CD8-positive, alpha-beta T cell (primary cell): ENCODE measurements at regions of chr17 and their contacts with region 1.

Region 1: GRCh38 chr17:65604070-65604469 is 42.6 kb upstream of the AXIN2 start:
- DNase-seq: no peak
- ATAC-seq: no peak
- H3K4me3 ChIP-seq: no peak overlapping the region
- H3K4me3 Mint-ChIP-seq: no peak overlapping the region
- H3K27ac ChIP-seq: no peak overlapping the region
- H3K27ac Mint-ChIP-seq: no peak overlapping the region
- H3K4me1 ChIP-seq: no peaks in the 10 kb centered on the region
- H3K4me1 Mint-ChIP-seq: peaks cover 6% of the 10 kb centered on the region
- H3K27me3 ChIP-seq: no peaks in the 10 kb centered on the region
- H3K27me3 Mint-ChIP-seq: peaks cover 5% of the 10 kb centered on the region
- CTCF ChIP-seq: no peak

Region 2: DNA sequence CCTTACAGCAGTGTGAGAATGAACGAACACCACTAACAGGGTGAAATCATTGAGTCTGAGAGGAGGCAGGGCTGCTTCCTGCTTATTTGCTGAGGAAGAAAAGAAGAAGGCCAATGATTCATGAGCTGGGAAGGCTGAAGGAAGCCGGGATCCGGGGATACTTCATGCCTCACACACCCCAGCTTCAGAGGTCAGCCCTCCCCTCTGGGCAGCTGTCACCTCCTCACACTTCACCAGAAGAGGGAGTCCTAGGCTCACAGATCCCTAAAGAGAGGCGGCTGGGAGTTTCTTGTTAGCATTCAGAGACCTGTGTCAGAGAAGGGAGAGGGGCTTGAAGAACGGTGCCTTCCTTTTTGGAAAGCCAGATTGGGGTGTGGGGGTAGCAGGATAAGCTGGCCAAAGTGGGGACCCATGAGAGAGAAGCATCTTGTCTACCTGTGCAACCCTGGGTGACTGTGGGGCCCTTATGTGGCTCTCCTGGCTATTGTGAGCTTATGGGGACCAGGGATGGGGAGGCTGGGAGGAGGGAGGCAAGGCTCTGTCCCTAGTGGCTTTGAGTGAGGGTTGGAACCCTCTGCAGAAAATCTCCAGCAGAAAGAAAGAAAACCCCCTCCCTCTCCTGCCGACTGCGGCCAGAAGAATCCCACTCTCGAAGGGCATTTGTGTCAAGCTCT is 372.3 kb before region 1 on chr17:
- CTCF ChIA-PET with region 1: no interaction called
- POLR2A ChIA-PET with region 1: no interaction called
- intact Hi-C with region 1: no loop called
- DNase-seq: peak in 7 of 9 experiments; percentile 15 to 64 (median 28)
- ATAC-seq: no peak
- H3K4me3 ChIP-seq: no peak overlapping the region
- H3K4me3 Mint-ChIP-seq: no peak overlapping the region
- H3K27ac ChIP-seq: no peak overlapping the region
- H3K27ac Mint-ChIP-seq: no peak overlapping the region
- H3K4me1 ChIP-seq: peaks cover 21% of the 10 kb centered on the region
- H3K4me1 Mint-ChIP-seq: peaks cover 20% of the 10 kb centered on the region
- H3K27me3 ChIP-seq: no peaks in the 10 kb centered on the region
- H3K27me3 Mint-ChIP-seq: peaks cover 5% of the 10 kb centered on the region
- CTCF ChIP-seq: no peak

Region 3: DNA sequence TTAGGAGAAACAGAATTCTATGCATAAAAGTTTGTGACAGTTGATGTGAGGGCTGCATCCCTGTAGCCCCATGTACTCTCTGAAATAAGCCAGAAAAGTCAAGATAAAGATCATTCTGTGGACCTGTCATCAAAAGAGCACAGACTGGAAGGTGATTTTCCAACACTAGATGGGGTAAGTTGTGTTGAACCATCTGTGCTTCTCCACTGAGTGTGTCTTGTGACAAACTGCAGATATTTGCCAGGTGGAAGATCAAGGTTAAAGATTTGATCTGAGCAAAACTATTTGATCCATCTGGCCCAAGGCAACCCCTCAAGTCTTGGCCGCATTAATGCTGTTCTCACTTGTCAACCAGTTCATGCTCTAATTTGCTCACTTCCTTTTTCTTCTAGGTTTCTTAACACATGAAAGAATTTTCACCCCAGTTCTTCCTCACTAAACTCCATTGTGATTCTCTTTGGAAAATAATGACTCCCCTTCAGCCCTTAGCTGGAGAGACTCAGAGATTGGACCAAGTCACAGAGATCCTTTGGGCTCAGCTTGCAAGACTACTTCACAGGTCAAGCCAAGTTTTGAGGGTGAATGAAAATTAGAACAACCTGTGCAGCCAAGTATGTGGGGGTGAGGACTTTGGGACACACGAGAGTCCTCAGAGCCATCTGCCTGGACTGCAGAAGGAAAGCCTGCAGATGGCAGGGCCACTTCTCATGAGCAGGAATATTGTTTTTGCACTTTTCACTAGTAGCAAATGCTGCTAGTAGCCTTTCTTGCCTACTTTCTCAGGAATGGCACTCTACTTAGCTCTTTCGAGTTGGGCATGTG is 209.2 kb before region 1 on chr17:
- CTCF ChIA-PET with region 1: no interaction called
- POLR2A ChIA-PET with region 1: no interaction called
- intact Hi-C with region 1: no loop called
- DNase-seq: no peak
- ATAC-seq: no peak
- H3K4me3 ChIP-seq: no peak overlapping the region
- H3K4me3 Mint-ChIP-seq: no peak overlapping the region
- H3K27ac ChIP-seq: no peak overlapping the region
- H3K27ac Mint-ChIP-seq: no peak overlapping the region
- H3K4me1 ChIP-seq: peaks cover 13% of the 10 kb centered on the region
- H3K4me1 Mint-ChIP-seq: peaks cover 25% of the 10 kb centered on the region
- H3K27me3 ChIP-seq: no peaks in the 10 kb centered on the region
- H3K27me3 Mint-ChIP-seq: no peaks in the 10 kb centered on the region
- CTCF ChIP-seq: no peak

Region 4: DNA sequence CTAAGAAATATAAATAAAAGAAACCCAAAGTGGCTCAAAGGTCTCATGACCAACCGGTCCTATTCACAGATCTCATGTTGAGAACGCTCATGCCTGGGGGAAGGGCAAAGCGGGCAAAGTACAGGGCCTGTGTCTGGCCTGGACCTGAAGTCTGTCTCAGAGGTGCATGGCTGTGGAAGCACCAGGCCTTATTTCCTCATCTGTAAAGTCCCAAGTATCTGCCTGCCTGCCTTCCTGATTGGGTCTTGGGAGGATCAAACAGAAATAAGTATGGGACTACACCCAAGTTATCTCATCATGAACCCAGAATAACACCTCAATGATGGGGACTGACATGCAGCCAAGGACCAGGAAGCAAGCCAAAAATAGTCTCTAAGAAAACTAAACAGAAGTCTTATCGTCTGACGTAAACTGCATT is 56.8 kb before region 1 on chr17:
- CTCF ChIA-PET with region 1: no interaction called
- POLR2A ChIA-PET with region 1: no interaction called
- intact Hi-C with region 1: loop called in 1 of 2 experiments (anchors 10 kb)
- DNase-seq: peak in 1 of 9 experiments; percentile 28
- ATAC-seq: peak; percentile 72
- H3K4me3 ChIP-seq: no peak overlapping the region
- H3K4me3 Mint-ChIP-seq: no peak overlapping the region
- H3K27ac ChIP-seq: no peak overlapping the region
- H3K27ac Mint-ChIP-seq: peak overlapping the region; percentile 65
- H3K4me1 ChIP-seq: peaks cover 24% of the 10 kb centered on the region
- H3K4me1 Mint-ChIP-seq: peaks cover 50% of the 10 kb centered on the region
- H3K27me3 ChIP-seq: no peaks in the 10 kb centered on the region
- H3K27me3 Mint-ChIP-seq: no peaks in the 10 kb centered on the region
- CTCF ChIP-seq: no peak